ENCODE measurements at regions of chr12 and their contacts with region 1.

Region 1: GRCh38 chr12:17778242-17778641 is 311.8 kb downstream of the RERGL start:
- DNase-seq: no peak
- H3K4me3 ChIP-seq: no peak overlapping the region
- H3K27ac ChIP-seq: no peak overlapping the region
- H3K4me1 ChIP-seq: no peaks in the 10 kb centered on the region
- H3K27me3 ChIP-seq: no peaks in the 10 kb centered on the region
- CTCF ChIP-seq: no peak

Region 2: GRCh38 chr12:17866802-17867201 is 88.6 kb after region 1 on chr12:
- intact Hi-C with region 1: loop called (anchors 5 kb)
- DNase-seq: no peak
- H3K4me3 ChIP-seq: no peak overlapping the region
- H3K27ac ChIP-seq: no peak overlapping the region
- H3K4me1 ChIP-seq: no peaks in the 10 kb centered on the region
- H3K27me3 ChIP-seq: no peaks in the 10 kb centered on the region
- CTCF ChIP-seq: no peak